ENCODE measurements at regions of chr9 and their contacts with region 1.

Region 1: GRCh38 chr9:136118320-136119060 is at the start of gene TMEM250:
- DNase-seq: peak; percentile 87 to 99 (median 90)

Region 2: DNA sequence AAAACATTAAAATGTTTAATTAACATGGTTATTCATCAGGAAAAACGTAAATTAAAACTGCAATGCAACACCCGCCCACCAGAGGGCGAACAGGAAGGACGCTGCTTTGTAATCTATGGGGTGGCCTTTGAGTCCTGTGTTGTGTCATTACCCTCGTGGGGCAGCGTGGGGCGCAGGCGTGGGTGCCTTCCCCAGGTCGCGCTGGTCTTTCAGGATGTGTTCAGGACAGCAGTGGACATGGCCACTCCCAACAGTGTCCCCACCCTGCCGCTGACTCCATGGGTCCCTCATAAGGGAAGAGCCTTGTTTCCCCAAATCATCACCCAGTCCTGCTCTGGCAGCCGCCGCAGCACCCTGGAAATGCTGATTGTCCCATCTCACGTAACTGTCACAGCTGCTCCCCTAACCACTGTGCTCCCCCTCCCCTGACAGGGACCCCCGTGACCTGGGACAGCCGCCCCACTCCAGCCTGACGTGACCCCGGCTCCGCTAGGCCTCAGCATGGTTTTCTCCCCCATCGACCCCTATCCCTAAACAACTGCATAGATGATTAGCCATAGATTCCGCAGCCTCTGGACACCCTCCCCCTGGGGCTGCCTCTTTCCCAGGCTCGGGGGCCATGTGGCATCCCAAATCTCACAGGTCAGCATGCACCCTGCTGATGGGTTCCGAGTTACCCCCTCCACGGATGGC is 515.6 kb before region 1 on chr9:
- intact Hi-C with region 1: loop called (anchors 10 kb)
- DNase-seq: peak in 6 of 10 donors; percentile 32 to 71 (median 54)

Region 3: DNA sequence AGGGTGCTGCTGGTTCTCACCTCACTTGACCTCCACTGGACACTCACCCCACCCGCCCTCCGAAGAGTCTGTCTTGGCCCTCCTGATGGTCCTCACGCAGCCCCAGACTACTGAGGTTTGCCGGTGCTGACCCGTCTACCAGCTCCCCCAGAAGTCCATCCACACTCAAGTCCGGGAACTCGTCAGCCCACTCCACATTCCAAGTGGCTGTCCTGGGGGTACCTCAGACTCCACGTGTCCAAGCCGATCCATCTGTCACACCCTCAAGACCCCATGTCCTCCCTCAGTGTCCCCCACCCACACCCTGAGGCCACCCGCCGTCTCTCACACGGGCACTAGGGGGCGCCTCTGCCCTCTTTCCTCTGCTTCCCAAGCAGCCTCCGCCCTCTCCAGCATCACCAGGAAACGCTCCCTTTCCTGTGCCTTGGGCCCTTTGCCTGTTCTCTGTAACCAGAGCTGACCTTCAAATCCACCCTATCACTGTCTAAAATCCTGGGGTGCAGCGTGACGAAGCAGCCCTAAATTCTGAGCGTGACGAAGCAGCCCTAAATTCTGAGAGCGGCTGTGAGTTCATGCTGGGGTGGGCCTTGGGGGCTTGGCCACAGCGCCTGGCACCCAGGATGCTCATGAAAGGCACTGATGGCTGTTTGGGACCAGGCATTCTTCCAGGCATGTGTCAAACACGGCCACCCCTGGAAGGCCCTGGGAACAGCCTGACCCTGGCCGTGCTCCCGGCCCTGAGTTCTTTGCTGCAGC is 320.8 kb before region 1 on chr9:
- intact Hi-C with region 1: loop called (anchors 10 kb)
- DNase-seq: peak in 7 of 10 donors; percentile 61 to 92 (median 64)

Region 4: GRCh38 chr9:135961277-135961705 is 157.2 kb before region 1 on chr9 and contains the start of gene UBAC1:
- intact Hi-C with region 1: loop called (anchors 1 kb)
- DNase-seq: peak; percentile 94 to 100 (median 96)

Region 5: DNA sequence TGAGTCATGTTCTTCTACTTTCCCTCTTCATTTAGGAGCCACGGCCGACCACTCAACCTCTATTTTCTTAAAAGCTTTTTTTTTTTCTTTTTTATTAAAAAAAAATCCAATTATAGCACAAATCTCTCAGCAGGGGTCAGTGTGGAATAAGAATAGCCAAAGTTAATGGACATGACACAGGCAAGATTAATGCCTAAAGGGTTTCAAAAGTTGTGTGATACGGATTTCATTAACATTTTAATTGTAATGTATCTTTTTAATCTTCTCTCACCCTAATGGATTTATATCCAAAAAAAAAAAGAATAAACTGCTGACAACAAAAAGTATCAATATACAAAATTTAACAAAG is 28.8 kb before region 1 on chr9:
- intact Hi-C with region 1: loop called (anchors 2 kb)
- DNase-seq: no peak

Region 6: GRCh38 chr9:136255896-136256890 is 137.7 kb after region 1 on chr9:
- intact Hi-C with region 1: no loop called
- DNase-seq: no peak